ENCODE measurements at regions of chr5 and their contacts with region 1.

Region 1: DNA sequence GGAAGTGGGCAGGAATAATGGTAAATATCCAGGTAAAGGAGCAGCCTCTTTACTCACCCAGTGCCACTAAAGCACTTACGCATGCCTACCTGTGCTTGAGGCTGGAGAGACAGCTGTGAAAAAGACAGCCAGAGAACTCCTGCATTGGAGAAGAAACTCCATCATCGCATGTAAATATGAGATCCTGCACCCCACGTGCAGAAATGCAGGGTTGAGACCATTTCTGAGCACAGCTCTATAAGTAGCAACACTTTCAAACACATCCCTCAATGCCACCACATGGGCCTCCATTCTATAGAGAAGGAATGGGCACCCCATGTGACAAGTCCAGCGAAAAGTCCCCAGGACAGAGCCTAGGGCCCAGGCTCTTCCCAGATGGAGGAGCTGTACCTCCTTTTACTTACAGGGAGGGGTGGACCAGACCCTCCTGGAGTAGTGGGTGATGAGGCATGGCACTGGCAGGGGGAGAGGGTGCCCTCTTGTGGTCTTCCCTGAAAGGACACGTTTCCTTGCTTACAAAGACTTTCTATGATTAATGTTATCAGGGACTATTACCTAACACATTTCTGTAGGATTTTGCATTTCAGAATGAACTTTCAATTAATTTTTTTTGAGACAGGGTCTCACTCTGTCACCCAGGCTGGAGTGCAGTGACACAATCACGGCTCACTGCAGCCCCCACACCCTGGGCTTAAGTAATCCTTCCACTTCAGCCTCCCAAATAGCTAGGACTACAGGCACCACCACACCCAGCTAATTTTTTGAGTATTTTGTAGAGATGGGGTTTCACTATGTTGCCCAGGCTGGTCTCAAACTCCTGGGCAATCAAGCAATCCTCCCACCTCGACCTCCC is 55.3 kb upstream of the IL17B start:
- DNase-seq: peak; percentile 21
- H3K4me3 Mint-ChIP-seq: no peak overlapping the region
- H3K27ac Mint-ChIP-seq: no peak overlapping the region
- H3K4me1 Mint-ChIP-seq: peaks cover 14% of the 10 kb centered on the region
- H3K27me3 Mint-ChIP-seq: no peaks in the 10 kb centered on the region

Region 2: GRCh38 chr5:149381987-149382340 is 52.4 kb before region 1 on chr5:
- intact Hi-C with region 1: loop called (anchors 1 kb)
- DNase-seq: peak; percentile 59
- H3K4me3 Mint-ChIP-seq: no peak overlapping the region
- H3K27ac Mint-ChIP-seq: no peak overlapping the region
- H3K4me1 Mint-ChIP-seq: no peaks in the 10 kb centered on the region
- H3K27me3 Mint-ChIP-seq: peaks cover 2% of the 10 kb centered on the region